ENCODE measurements at regions of chr7 and their contacts with region 1.

Region 1: DNA sequence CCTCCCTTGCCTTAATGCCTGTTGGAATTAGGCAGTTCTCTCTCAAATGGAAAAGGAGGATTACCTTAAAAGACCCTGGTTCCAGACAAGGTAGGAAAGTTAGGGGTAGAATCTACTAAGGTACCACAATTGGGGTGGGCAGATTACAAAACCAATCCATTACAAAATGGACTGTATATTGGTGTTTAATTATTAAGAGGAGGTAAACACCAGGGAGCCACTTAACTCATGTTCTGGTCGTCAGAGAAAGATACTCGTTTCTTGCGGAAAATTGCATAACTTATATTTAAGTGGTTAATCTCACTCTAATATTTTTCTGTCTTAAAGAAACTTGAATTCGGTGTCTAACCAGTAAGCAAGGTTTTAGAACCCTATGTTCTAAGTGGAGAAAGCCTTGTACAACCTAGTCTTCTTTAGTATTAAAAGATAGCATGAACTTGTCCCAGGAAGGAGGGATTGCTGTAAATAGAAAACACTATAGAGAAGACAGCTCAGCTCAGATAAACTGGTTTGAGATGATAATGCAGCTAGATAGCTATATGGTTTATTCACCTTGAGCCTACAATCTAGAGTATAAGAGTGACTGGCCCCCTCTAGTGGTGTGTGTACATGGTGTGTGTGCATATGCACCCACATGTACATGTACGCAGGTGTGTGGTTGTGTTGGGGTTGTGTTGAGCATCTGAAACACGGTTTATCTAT is 58.0 kb upstream of the STRIP2 start:
- DNase-seq: peak; percentile 61 to 65
- ATAC-seq: peak; percentile 91 to 97
- H3K4me3 ChIP-seq: no peak overlapping the region
- H3K27ac ChIP-seq: no peak overlapping the region
- H3K4me1 ChIP-seq: peaks cover 3% of the 10 kb centered on the region; the same call in 1 of the 3 replicates
- CTCF ChIP-seq: peak; percentile 65
- EP300 ChIP-seq: no peak
- POLR2A ChIP-seq: no peak
- RAD21 ChIP-seq: peak in 1 of 2 experiments; percentile 49; a peak in 2 of 5 replicates

Region 2: DNA sequence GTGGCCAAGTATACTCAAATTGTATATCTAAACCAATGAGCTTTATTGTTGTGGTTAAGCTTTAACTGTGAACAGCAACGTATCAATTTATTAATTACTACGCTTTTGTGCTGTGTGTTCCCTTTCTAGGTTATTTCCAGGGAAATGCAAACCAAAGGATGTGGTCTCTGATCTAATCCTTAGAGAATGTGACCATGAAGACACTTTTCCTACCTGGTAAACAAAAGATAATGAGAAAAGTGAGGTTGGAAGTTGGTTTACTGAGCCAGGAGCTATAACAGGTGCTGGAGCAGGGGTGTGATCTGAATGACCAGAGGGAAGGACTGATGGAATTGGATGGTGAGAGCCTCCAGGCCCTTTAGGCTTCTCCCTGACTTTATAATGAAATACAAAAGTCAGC is 662.4 kb before region 1 on chr7:
- CTCF ChIA-PET with region 1: no interaction called
- POLR2A ChIA-PET with region 1: no interaction called
- DNase-seq: no peak
- ATAC-seq: no peak
- H3K4me3 ChIP-seq: no peak overlapping the region
- H3K27ac ChIP-seq: no peak overlapping the region
- H3K4me1 ChIP-seq: no peaks in the 10 kb centered on the region
- CTCF ChIP-seq: no peak
- EP300 ChIP-seq: no peak
- POLR2A ChIP-seq: no peak
- RAD21 ChIP-seq: no peak

Region 3: DNA sequence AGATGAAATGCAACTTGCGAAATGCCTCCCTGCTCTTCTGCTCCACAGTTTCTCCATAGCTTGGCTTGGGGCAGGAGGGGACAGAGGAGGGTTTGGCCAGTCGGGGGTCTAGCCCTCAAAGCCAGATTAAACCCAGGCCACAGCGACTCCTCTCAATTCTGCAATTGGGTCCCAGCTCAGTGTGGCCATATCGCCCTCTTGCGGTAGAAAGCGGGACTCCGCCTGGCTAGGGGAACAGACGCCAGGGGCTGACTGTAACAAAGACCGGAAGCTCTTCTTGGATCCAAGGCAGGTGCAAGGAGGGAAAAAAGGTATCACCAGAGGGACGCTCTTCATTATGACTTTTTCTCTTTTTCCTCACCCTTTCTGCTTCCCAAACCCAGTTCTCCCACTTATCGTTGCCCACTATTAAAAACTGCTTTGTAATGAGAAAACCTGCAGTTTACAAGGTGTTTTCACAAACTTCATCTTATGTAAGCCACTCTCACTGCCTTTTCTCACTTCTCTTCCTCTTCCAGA is 284.7 kb before region 1 on chr7:
- CTCF ChIA-PET with region 1: no interaction called
- POLR2A ChIA-PET with region 1: no interaction called
- DNase-seq: peak; percentile 67 to 77
- ATAC-seq: peak; percentile 96 to 99
- H3K4me3 ChIP-seq: no peak overlapping the region
- H3K27ac ChIP-seq: no peak overlapping the region
- H3K4me1 ChIP-seq: no peaks in the 10 kb centered on the region
- CTCF ChIP-seq: peak; percentile 96
- EP300 ChIP-seq: no peak
- POLR2A ChIP-seq: no peak
- RAD21 ChIP-seq: peak; percentile 95 to 96

Region 4: DNA sequence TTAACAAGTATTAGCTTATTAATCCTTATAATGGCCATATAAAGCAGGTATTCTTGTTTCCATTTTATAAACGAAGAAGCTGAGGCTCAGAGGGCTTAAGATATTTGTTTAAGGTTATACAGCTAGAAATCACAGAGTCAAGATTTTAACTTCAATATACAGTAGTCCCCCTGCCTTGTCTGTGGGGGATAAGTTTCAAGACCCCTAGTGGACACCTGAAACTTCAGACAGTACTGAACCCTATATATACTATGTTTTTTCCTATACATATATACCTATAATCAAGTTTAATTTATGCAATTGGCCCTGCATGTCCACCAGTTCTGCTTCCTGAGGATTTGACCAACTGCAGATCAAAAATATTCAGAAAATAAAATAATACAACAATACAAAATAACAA is 13.6 kb after region 1 on chr7:
- CTCF ChIA-PET with region 1: interaction called, 28 read pairs
- POLR2A ChIA-PET with region 1: no interaction called
- DNase-seq: no peak
- ATAC-seq: no peak
- H3K4me3 ChIP-seq: no peak overlapping the region
- H3K27ac ChIP-seq: no peak overlapping the region
- H3K4me1 ChIP-seq: no peaks in the 10 kb centered on the region
- CTCF ChIP-seq: no peak
- EP300 ChIP-seq: no peak
- POLR2A ChIP-seq: no peak
- RAD21 ChIP-seq: no peak

Region 5: GRCh38 chr7:129502376-129502776 is 126.1 kb after region 1 on chr7 and contains the start of gene SMKR1:
- CTCF ChIA-PET with region 1: no interaction called
- POLR2A ChIA-PET with region 1: no interaction called
- DNase-seq: peak; percentile 73 to 92
- ATAC-seq: peak; percentile 88 to 92
- H3K4me3 ChIP-seq: peak within 1 kb of the TSS; percentile 72
- H3K27ac ChIP-seq: peak within 1 kb of the TSS; percentile 82 to 88
- H3K4me1 ChIP-seq: peaks cover 5% of the 10 kb centered on the region; the same call in 1 of the 3 replicates
- CTCF ChIP-seq: no peak
- EP300 ChIP-seq: no peak
- POLR2A ChIP-seq: peak; percentile 95
- RAD21 ChIP-seq: no peak; a peak in 1 of 5 replicates
- polyA plus RNA-seq, gene SMKR1: 12.0 and 12.2 TPM in 2 replicates